SK-N-SH (cell line): ENCODE measurements at regions of chr10 and their contacts with region 1.

Region 1: GRCh38 chr10:45249978-45250693 is 65.3 kb downstream of the OR13A1 start:
- DNase-seq: peak; percentile 38
- H3K4me3 ChIP-seq: peak overlapping the region; percentile 33 to 61; a peak in 3 of 4 replicates
- H3K27ac ChIP-seq: no peak overlapping the region
- H3K4me1 ChIP-seq: no peaks in the 10 kb centered on the region; a peak in 1 of 4 replicates
- H3K27me3 ChIP-seq: peaks cover 20% of the 10 kb centered on the region; the same call in 1 of the 2 replicates
- CTCF ChIP-seq: peak; percentile 72
- EP300 ChIP-seq: no peak
- RAD21 ChIP-seq: peak; percentile 70

Region 2: DNA sequence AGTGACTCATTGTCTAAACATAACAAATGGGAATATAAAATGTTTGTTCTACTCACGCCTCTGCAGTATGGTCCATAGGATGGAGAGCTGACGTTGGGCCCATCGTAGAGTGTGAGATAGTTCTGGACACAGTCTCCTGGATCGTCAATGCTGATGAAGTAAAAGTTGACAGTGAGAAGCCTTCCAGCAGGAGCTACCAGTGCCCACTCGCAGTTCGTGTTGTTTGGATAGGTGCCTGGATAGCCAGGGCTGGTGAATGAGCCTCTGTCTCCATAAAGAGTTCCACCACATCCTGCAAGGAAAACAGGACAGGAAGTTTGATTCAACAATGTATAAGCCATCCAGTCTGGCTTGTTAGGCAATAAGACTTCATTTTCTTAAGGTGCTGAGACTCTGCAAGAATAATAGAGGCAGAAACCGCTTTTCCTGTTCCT is 14.3 kb before region 1 on chr10:
- CTCF ChIA-PET with region 1: interaction called, 14 read pairs
- POLR2A ChIA-PET with region 1: no interaction called
- DNase-seq: no peak
- H3K4me3 ChIP-seq: no peak overlapping the region
- H3K27ac ChIP-seq: no peak overlapping the region
- H3K4me1 ChIP-seq: no peaks in the 10 kb centered on the region
- H3K27me3 ChIP-seq: no peaks in the 10 kb centered on the region
- CTCF ChIP-seq: no peak
- EP300 ChIP-seq: no peak
- RAD21 ChIP-seq: no peak

Region 3: DNA sequence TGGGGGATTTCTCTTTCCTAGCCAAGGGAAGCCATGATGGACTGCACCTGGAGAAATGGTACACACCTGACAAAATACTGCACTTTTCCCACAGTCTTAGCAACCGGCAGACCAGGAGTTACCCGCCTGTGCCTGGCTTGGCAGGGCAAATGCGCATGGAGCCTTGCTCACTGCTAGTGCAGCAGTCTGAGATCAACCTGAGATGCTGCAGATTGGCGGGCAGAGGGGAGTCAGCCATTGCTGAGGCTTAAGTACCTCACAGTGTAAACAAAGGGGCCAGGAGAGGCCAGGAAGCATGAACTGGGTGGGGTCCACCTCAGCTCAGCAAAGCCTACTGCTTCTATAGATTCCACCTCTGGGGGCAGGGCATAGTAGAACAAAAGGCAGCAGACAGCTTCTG is 15.9 kb after region 1 on chr10:
- CTCF ChIA-PET with region 1: interaction called, 13 read pairs
- POLR2A ChIA-PET with region 1: no interaction called
- DNase-seq: no peak
- H3K4me3 ChIP-seq: no peak overlapping the region
- H3K27ac ChIP-seq: no peak overlapping the region
- H3K4me1 ChIP-seq: no peaks in the 10 kb centered on the region
- H3K27me3 ChIP-seq: no peaks in the 10 kb centered on the region
- CTCF ChIP-seq: no peak
- EP300 ChIP-seq: no peak
- RAD21 ChIP-seq: no peak

Region 4: GRCh38 chr10:45672181-45673073 is 422.3 kb after region 1 on chr10 and contains the start of gene ZFAND4:
- CTCF ChIA-PET with region 1: interaction called, 10 read pairs
- POLR2A ChIA-PET with region 1: no interaction called
- DNase-seq: peak; percentile 99
- H3K4me3 ChIP-seq: peak within 1 kb of the TSS; percentile 76 to 94
- H3K27ac ChIP-seq: peak within 1 kb of the TSS; percentile 53 to 86
- H3K4me1 ChIP-seq: peaks cover 0 to 5% of the 10 kb centered on the region in 2 experiments; a peak in 1 of 4 replicates
- H3K27me3 ChIP-seq: no peaks in the 10 kb centered on the region
- CTCF ChIP-seq: peak; percentile 52
- EP300 ChIP-seq: peak in 1 of 2 experiments; percentile 45; a peak in 1 of 4 replicates
- RAD21 ChIP-seq: peak; percentile 67
- polyA plus RNA-seq, gene ZFAND4: 2.0 and 2.1 TPM in 2 replicates